ENCODE measurements at regions of chr1 and their contacts with region 1.

Region 1: GRCh38 chr1:96845464-96845863 is 123.9 kb downstream of the PTBP2 start:
- DNase-seq: peak; percentile 40 to 78 (median 64)
- H3K4me3 ChIP-seq: no peak overlapping the region
- H3K27ac ChIP-seq: no peak overlapping the region
- H3K4me1 ChIP-seq: no peaks in the 10 kb centered on the region
- H3K27me3 ChIP-seq: no peaks in the 10 kb centered on the region
- CTCF ChIP-seq: peak; percentile 50 to 77 (median 70)
- POLR2A ChIP-seq: no peak

Region 2: DNA sequence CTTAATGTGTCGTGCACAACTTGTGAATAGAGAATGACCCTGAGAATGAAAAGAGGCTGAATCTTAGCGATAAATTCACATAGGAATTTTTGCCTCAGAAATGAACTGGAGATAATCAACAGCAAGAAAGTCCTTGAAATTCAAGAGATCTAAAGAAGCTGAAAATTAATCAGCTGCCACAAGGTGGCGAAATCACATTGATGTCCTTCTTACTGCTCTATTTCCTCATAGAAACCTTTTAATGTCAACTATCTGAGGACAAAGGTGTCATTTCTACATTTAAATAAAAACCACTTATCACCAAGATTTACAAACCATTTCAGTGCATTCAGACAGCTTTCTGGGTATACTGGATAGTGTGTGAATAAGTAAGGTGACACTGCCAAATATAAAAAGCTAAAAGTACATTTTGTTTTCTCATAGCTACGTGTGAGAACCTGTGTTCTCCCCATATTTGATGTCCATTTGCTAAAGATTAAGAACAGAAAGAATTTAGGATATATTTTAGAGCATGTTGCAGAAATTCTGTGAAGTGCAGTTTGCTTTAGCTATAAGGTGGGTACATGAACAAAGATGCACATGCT is 609.2 kb before region 1 on chr1:
- intact Hi-C with region 1: loop called in 1 of 2 experiments (anchors 10 kb)
- DNase-seq: peak in 6 of 7 donors; percentile 28 to 69 (median 50)
- H3K4me3 ChIP-seq: no peak overlapping the region
- H3K27ac ChIP-seq: no peak overlapping the region
- H3K4me1 ChIP-seq: no peaks in the 10 kb centered on the region
- H3K27me3 ChIP-seq: no peaks in the 10 kb centered on the region
- CTCF ChIP-seq: peak; percentile 48 to 75 (median 61)
- POLR2A ChIP-seq: no peak

Region 3: GRCh38 chr1:96987186-96987703 is 141.8 kb after region 1 on chr1:
- intact Hi-C with region 1: no loop called
- DNase-seq: no peak
- H3K4me3 ChIP-seq: no peak overlapping the region
- H3K27ac ChIP-seq: no peak overlapping the region
- H3K4me1 ChIP-seq: no peaks in the 10 kb centered on the region
- H3K27me3 ChIP-seq: no peaks in the 10 kb centered on the region
- CTCF ChIP-seq: no peak
- POLR2A ChIP-seq: no peak